ENCODE measurements at regions of chr16 and their contacts with region 1.

Region 1: GRCh38 chr16:1705688-1706385 is at the start of gene MAPK8IP3:
- DNase-seq: peak; percentile 85 to 97
- H3K4me3 ChIP-seq: peak within 1 kb of the TSS; percentile 99
- H3K4me3 Mint-ChIP-seq: peak within 1 kb of the TSS; percentile 89
- H3K27ac Mint-ChIP-seq: peak within 1 kb of the TSS; percentile 98
- H3K4me1 ChIP-seq: no peaks in the 10 kb centered on the region; the same call in 1 of the 2 replicates
- H3K4me1 Mint-ChIP-seq: peaks cover 8% of the 10 kb centered on the region
- H3K27me3 ChIP-seq: no peaks in the 10 kb centered on the region
- H3K27me3 Mint-ChIP-seq: no peaks in the 10 kb centered on the region
- CTCF ChIP-seq: peak; percentile 48 to 89
- total RNA-seq, gene MAPK8IP3: 60.5 and 74.9 TPM in 2 replicates

Region 2: DNA sequence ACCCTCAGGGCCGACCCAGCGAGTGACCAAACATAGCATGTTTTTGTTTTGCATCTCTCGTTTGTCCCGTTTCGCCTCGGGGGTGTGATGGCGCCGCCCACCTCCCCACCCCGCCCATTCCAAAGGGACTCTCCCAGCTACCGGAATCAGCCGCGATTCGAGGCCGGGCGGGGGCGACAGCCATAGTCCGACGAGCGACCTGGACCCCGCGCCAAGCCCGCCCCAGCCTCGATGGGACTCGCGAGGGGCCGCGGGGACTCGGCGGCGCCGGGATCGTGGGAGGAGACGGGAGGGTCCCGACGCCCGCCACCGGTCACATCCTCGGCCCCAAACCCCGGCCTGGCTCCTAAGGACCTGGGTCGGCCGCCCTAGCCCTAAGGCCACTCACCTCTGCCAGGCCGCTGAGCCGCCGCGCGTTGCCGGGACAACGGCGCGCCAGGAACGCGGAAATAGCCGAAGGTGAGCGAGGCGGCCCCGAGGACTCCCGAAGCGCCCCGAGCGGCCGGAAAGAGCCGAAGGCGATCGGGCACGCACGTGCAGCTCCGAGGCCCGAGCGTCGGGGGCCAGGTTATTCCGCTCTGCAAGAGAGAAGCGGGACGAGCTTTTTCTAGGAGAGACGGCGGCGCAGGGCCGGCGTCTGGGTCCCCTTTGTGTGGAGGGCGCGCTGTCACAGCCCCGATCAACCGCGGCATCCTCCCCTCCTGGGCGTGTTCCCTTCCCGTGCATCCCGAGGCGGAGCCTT is 95.4 kb before region 1 on chr16:
- CTCF ChIA-PET with region 1: interaction called, 3 read pairs
- POLR2A ChIA-PET with region 1: interaction called, 13 read pairs
- intact Hi-C with region 1: loop called (anchors 5 kb)
- DNase-seq: peak; percentile 87 to 95
- H3K4me3 ChIP-seq: peak overlapping the region; percentile 68
- H3K4me3 Mint-ChIP-seq: peak overlapping the region; percentile 80
- H3K27ac Mint-ChIP-seq: peak overlapping the region; percentile 92
- H3K4me1 ChIP-seq: peaks cover 5% of the 10 kb centered on the region; the same call in 1 of the 2 replicates
- H3K4me1 Mint-ChIP-seq: peaks cover 5% of the 10 kb centered on the region
- H3K27me3 ChIP-seq: no peaks in the 10 kb centered on the region
- H3K27me3 Mint-ChIP-seq: no peaks in the 10 kb centered on the region
- CTCF ChIP-seq: no peak

Region 3: DNA sequence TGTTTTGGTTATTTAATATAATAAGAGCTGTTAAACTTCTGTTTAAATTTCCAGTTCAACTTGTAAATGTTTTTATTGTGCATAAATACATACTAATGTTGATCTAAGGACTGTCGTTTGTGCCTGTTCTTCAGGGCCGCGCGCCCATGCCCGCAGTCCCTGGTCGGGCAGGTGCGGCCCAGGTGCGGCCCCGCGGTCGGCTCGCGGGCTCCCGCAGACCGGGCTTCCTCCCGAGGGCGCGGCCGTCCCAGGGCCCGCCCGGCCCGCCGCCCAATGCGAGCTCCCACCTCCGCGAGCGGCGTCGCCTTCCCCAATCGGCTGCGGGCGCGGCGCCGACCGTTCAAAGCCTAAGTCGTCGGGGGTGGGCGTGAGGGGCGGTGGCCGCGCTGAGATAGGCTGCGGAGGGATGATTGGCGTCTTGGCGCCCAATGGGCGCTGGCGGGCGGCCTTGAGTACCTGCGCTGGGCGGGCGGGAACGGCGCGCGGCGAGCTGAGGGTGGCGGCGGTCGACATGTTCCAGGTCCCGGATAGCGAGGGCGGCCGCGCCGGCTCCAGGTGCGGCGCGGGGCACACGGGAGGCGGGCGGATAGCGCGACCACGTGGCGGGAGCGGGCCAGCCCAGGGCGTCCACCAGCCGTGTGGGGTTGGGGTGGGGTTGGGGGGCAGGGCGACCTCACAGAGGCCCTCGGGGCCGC is 27.9 kb before region 1 on chr16 and contains the start of gene JPT2:
- CTCF ChIA-PET with region 1: interaction called, 35 read pairs
- POLR2A ChIA-PET with region 1: interaction called, 17 read pairs
- intact Hi-C with region 1: loop called (anchors 1 kb)
- DNase-seq: peak; percentile 96 to 97
- H3K4me3 ChIP-seq: peak within 1 kb of the TSS; percentile 82
- H3K4me3 Mint-ChIP-seq: peak within 1 kb of the TSS; percentile 96
- H3K27ac Mint-ChIP-seq: peak within 1 kb of the TSS; percentile 91
- H3K4me1 ChIP-seq: peaks cover 9% of the 10 kb centered on the region; the same call in 1 of the 2 replicates
- H3K4me1 Mint-ChIP-seq: peaks cover 8% of the 10 kb centered on the region
- H3K27me3 ChIP-seq: no peaks in the 10 kb centered on the region
- H3K27me3 Mint-ChIP-seq: no peaks in the 10 kb centered on the region
- CTCF ChIP-seq: no peak
- total RNA-seq, gene JPT2: 170 and 178 TPM in 2 replicates

Region 4: DNA sequence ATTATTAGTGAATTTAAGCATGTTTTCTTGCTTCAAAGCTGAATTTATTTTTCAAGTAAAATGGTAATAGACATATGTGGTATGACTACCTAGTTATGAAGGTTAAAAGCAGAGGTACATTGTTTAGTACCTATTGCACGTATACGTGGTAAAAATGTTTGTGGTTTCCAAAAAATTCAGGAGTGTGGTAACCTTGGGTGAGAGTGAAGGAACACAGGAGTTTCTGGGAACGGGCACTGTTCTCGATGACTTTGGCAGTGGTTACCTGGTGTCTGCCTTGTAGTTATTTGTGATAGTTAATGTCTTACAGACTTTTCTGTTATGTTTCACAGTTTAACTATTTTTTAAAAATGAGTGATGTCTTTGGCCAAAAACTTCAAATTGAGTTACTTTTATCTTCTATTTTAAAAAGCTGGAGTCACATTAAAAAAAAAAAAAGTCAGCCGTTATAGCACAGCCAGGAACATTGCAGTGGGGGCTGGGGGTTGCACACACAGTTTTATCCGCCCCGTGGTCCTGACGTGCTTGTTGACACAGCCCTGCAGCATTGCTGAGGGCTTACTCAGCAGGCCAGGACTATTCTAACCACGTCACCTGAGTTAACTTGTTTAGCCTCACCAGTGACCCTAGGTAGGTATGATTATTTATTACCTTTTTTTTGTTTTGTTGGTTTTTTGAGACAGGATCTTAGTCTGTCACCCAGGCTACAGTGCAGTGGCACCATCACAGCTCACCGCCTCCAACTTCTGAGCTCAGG is 16.9 kb before region 1 on chr16:
- CTCF ChIA-PET with region 1: interaction called, 6 read pairs
- POLR2A ChIA-PET with region 1: interaction called, 6 read pairs
- intact Hi-C with region 1: loop called (anchors 2 kb)
- DNase-seq: peak; percentile 85 to 89
- H3K4me3 ChIP-seq: no peak overlapping the region
- H3K4me3 Mint-ChIP-seq: peak overlapping the region; percentile 72
- H3K27ac Mint-ChIP-seq: peak overlapping the region; percentile 97
- H3K4me1 ChIP-seq: peaks cover 29% of the 10 kb centered on the region
- H3K4me1 Mint-ChIP-seq: peaks cover 26% of the 10 kb centered on the region
- H3K27me3 ChIP-seq: no peaks in the 10 kb centered on the region
- H3K27me3 Mint-ChIP-seq: no peaks in the 10 kb centered on the region
- CTCF ChIP-seq: no peak

Region 5: DNA sequence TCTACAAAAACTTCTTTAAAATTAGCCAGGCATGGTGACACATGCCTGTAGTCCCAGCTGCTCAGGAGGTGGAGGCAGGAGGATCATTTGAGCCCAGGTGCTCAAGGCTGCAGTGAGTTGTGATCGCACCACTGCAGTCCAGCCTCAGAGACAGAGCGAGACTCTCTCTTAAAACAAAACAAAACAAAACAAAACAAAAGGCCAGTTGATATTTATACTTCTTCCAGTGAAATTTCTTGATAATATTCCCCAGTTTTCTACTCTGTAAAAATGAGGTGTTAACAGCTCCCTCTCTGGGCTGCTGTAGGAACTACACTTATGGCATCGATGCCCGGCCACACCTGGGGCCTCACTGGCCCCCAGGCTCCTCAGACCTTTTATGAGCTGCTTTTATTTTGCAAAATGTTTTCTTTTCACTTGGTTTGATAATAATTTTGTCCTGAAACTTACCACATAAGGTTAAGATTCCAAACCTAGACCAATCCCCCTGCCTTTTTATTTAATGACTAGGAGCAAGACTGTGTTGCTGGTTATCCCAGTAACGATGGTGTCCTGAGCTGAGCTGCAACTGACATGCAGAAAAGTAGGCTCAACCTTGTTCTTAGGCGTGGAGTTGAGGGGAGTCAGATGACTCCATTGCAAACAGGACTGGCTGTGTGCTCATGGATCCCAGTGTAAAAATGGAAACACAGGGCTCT is 17.8 kb after region 1 on chr16:
- CTCF ChIA-PET with region 1: interaction called, 10 read pairs
- POLR2A ChIA-PET with region 1: interaction called, 3 read pairs
- intact Hi-C with region 1: no loop called
- DNase-seq: peak in 1 of 2 experiments; percentile 51
- H3K4me3 ChIP-seq: no peak overlapping the region
- H3K4me3 Mint-ChIP-seq: no peak overlapping the region
- H3K27ac Mint-ChIP-seq: no peak overlapping the region
- H3K4me1 ChIP-seq: no peaks in the 10 kb centered on the region
- H3K4me1 Mint-ChIP-seq: no peaks in the 10 kb centered on the region
- H3K27me3 ChIP-seq: no peaks in the 10 kb centered on the region
- H3K27me3 Mint-ChIP-seq: no peaks in the 10 kb centered on the region
- CTCF ChIP-seq: peak; percentile 63 to 64

Region 6: DNA sequence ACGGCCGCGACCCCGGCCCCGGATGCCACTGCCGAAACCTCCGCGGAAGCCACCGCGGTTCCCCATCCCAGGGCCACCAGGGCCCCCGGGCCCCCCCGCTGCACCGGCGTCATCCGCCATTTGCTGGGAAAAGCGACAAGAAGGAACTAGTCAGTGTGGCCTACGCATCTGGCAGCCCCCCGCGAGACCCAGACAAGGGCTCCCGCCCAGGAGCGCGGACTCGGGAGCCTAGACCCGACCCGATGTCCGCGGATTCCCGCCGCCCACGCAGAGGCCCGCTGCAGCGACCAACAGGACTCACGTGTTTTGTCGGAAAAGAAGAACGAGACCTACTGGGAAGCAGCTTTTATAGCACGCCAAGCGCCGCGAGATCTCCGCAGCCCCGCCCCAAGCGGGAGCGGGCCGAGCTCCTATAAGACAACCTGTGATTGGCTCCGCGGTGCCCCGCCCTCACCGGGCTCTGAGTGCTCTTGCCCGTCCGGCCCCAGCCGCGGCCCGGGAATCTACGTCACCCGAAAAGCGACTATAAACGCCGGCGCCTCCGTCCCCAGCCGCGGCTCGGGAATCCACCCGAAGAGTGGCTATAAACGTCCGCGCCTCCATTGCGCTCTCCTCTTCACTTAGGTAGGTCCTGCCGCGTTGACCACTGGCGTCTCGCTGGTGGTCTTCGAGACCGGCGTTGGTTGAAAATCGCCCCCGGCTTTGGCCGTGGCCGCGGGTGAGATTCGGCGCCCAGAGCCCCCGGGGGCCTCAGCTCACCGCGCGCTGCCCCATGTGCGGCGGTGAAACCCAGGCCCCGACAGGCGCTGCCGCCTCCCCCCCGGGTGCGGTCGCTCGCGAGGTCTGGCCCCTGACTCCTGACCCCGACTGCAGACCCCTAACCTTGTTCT is 258.9 kb after region 1 on chr16 and contains the start of gene RPS2:
- CTCF ChIA-PET with region 1: no interaction called
- POLR2A ChIA-PET with region 1: interaction called, 13 read pairs
- intact Hi-C with region 1: no loop called
- DNase-seq: peak; percentile 97 to 98
- H3K4me3 ChIP-seq: peak within 1 kb of the TSS; percentile 83
- H3K4me3 Mint-ChIP-seq: peak within 1 kb of the TSS; percentile 76
- H3K27ac Mint-ChIP-seq: peak within 1 kb of the TSS; percentile 96
- H3K4me1 ChIP-seq: peaks cover 17% of the 10 kb centered on the region
- H3K4me1 Mint-ChIP-seq: peaks cover 22% of the 10 kb centered on the region
- H3K27me3 ChIP-seq: no peaks in the 10 kb centered on the region
- H3K27me3 Mint-ChIP-seq: no peaks in the 10 kb centered on the region
- CTCF ChIP-seq: no peak
- total RNA-seq, gene RPS2: 2,961 and 3,006 TPM in 2 replicates

Measured in Caco-2 (cell line).